A549 (cell line): ENCODE measurements at regions of chr2 and their contacts with region 1.

Region 1: GRCh38 chr2:85266146-85267041 is 61.4 kb downstream of the TGOLN2 start:
- DNase-seq: peak; percentile 67 to 74
- ATAC-seq: peak in 1 of 2 experiments; percentile 93; a peak in 3 of 6 replicates
- H3K4me3 ChIP-seq: no peak overlapping the region
- H3K27ac ChIP-seq: no peak overlapping the region
- H3K4me1 ChIP-seq: no peaks in the 10 kb centered on the region
- CTCF ChIP-seq: peak; percentile 92
- EP300 ChIP-seq: no peak
- POLR2A ChIP-seq: no peak
- RAD21 ChIP-seq: peak; percentile 55 to 68

Region 2: GRCh38 chr2:85132834-85133637 is 133.4 kb before region 1 on chr2 and contains the start of gene TCF7L1:
- CTCF ChIA-PET with region 1: interaction called, 16 read pairs
- POLR2A ChIA-PET with region 1: no interaction called
- DNase-seq: peak; percentile 89 to 93
- ATAC-seq: peak; percentile 87 to 96
- H3K4me3 ChIP-seq: peak within 1 kb of the TSS; percentile 61
- H3K27ac ChIP-seq: peak within 1 kb of the TSS; percentile 76 to 90
- H3K4me1 ChIP-seq: peaks cover 9% of the 10 kb centered on the region
- CTCF ChIP-seq: peak; percentile 78
- EP300 ChIP-seq: no peak
- POLR2A ChIP-seq: peak; percentile 70
- RAD21 ChIP-seq: peak; percentile 72 to 86
- polyA plus RNA-seq, gene TCF7L1: 0.68 and 0.95 TPM in 2 replicates

Region 3: DNA sequence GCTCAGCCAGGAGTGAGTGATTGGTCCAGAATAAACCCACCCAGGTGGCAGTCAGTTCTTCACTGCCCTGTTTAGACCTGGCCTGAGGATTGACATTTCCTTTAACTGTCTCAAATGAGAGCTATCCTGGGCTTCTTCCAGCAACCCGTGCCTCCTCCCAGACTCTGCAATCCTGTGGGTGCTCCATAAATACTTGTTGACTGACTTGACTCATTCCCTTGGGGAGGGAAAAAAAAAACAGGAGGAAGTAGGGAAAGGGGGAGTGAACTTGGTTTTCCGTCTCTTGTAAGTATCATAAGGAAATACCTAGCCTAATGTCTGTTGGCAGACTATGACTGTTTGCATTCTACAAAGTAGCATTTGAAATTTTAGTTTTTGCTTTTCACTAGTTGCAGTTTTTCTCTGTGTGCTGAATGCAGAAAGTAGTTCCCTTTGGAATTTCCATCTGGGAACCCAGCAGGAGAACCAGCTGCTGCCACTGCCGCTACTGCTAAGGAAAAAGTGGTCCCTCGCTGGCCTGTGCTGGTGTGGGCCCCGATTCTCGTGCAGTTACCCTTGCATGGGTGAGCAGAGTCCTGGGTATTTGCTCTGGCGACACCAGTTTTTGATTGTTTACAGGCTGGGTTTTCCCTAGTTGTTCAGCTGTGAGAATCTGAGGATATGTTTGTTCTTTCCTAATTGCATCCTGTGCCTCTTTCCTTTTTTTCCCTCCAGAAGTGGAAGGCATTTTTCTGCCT is 17.5 kb before region 1 on chr2:
- CTCF ChIA-PET with region 1: interaction called, 16 read pairs
- POLR2A ChIA-PET with region 1: no interaction called
- DNase-seq: peak in 1 of 2 experiments; percentile 57
- ATAC-seq: peak; percentile 35 to 76; a peak in 5 of 6 replicates
- H3K4me3 ChIP-seq: no peak overlapping the region
- H3K27ac ChIP-seq: peak overlapping the region in 1 of 2 experiments; percentile 30; a peak in 3 of 6 replicates
- H3K4me1 ChIP-seq: peaks cover 22% of the 10 kb centered on the region
- CTCF ChIP-seq: no peak
- EP300 ChIP-seq: no peak
- POLR2A ChIP-seq: no peak
- RAD21 ChIP-seq: no peak

Region 4: GRCh38 chr2:85255813-85256594 is 10.4 kb before region 1 on chr2:
- CTCF ChIA-PET with region 1: interaction called, 24 read pairs
- POLR2A ChIA-PET with region 1: no interaction called
- DNase-seq: no peak
- ATAC-seq: no peak
- H3K4me3 ChIP-seq: no peak overlapping the region
- H3K27ac ChIP-seq: no peak overlapping the region
- H3K4me1 ChIP-seq: no peaks in the 10 kb centered on the region; the same call in 2 of the 3 replicates
- CTCF ChIP-seq: no peak
- EP300 ChIP-seq: no peak
- POLR2A ChIP-seq: no peak
- RAD21 ChIP-seq: no peak